Endothelial cell of umbilical vein (primary cell): ENCODE measurements at regions of chr19 and their contacts with region 1.

Region 1: GRCh38 chr19:54168174-54168917 is 4.6 kb downstream of the TMC4 start:
- DNase-seq: peak; percentile 82
- H3K4me3 ChIP-seq: no peak overlapping the region
- H3K27ac ChIP-seq: no peak overlapping the region
- H3K4me1 ChIP-seq: no peaks in the 10 kb centered on the region
- H3K27me3 ChIP-seq: peaks cover 0 to 8% of the 10 kb centered on the region in 2 experiments
- CTCF ChIP-seq: peak; percentile 82 to 96
- POLR2A ChIP-seq: no peak

Region 2: GRCh38 chr19:54209811-54210494 is 41.6 kb after region 1 on chr19:
- CTCF ChIA-PET with region 1: interaction called, 6 read pairs
- POLR2A ChIA-PET with region 1: no interaction called
- dilution Hi-C with region 1: no loop called
- intact Hi-C with region 1: loop called (anchors 1 kb)
- DNase-seq: peak; percentile 96
- H3K4me3 ChIP-seq: no peak overlapping the region
- H3K27ac ChIP-seq: peak overlapping the region; percentile 22
- H3K4me1 ChIP-seq: peaks cover 24% of the 10 kb centered on the region
- H3K27me3 ChIP-seq: no peaks in the 10 kb centered on the region
- CTCF ChIP-seq: no peak
- POLR2A ChIP-seq: peak; percentile 7